ENCODE measurements at regions of chr6 and their contacts with region 1.

Region 1: DNA sequence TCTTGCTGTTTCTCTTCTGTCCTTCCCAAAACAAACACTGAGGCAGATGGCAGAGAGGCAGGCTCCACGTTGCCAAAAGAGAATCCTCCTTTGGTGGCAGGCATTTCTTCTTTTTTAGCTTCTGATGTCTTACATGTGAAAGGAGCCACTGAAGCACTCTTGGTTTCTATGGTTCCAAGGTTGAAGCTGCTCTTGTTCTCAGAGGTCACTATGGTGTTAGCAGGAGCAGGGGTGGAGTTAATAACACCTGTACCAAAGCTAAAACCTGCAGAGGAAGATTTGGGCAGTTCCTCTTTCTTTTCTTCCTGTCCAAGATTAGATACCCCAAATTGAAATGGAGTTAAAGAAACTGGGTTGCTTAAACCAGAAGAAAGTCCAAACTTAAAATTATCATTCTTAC is 28.8 kb downstream of the FAM8A1 start:
- DNase-seq: no peak
- H3K4me3 ChIP-seq: no peak overlapping the region
- H3K27ac ChIP-seq: no peak overlapping the region
- H3K4me1 ChIP-seq: no peaks in the 10 kb centered on the region
- H3K27me3 ChIP-seq: no peaks in the 10 kb centered on the region
- CTCF ChIP-seq: no peak
- EP300 ChIP-seq: no peak
- POLR2A ChIP-seq: no peak
- RAD21 ChIP-seq: no peak

Region 2: GRCh38 chr6:17640477-17640917 is 11.6 kb after region 1 on chr6:
- CTCF ChIA-PET with region 1: interaction called, 12 read pairs
- POLR2A ChIA-PET with region 1: no interaction called
- DNase-seq: no peak
- H3K4me3 ChIP-seq: no peak overlapping the region
- H3K27ac ChIP-seq: no peak overlapping the region
- H3K4me1 ChIP-seq: no peaks in the 10 kb centered on the region
- H3K27me3 ChIP-seq: no peaks in the 10 kb centered on the region
- CTCF ChIP-seq: no peak
- EP300 ChIP-seq: no peak
- POLR2A ChIP-seq: no peak
- RAD21 ChIP-seq: no peak